ENCODE measurements at regions of chr6 and their contacts with region 1.

Region 1: GRCh38 chr6:56445818-56446217 is 196.9 kb downstream of the DST start:
- DNase-seq: no peak
- ATAC-seq: peak; percentile 82

Region 2: DNA sequence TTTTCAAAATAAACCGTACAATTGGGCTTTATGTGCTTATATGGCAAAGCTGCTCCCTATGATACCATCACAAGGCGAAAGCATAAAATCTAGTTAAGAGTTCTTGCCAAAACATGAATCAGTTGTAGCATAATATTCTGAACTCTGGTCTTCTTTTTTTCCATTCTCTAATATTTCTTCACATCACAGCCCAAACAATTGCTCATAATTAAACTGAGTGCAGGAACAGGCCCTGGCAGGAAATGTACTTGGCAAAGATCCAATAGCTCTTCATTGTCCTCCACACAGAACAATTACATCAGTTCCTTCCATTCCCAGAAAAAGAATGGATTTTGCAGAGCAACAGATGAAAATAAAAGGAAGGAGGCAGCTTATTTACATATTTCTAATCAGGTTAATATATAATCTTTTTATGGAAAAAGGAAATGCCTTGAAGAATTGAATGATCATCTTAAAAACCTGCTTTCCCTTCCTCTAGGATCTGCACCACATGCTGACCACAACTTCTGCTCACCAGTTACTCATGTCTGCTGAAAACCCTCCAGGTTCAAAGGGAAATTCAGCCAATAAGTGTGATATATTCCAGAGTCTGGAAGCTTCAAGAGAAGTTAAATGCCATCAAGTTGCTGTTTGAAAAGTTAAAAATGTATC is 75.1 kb before region 1 on chr6:
- intact Hi-C with region 1: loop called (anchors 5 kb)
- DNase-seq: no peak
- ATAC-seq: peak; percentile 83

Measured in Right ventricle myocardium superior (tissue), 1 donor.